Activated CD4-positive, alpha-beta T cell treated with anti-CD3 and anti-CD28 coated beads for 36 hours (primary cell): ENCODE measurements at regions of chr2 and their contacts with region 1.

Region 1: GRCh38 chr2:159712143-159712928 is at the start of gene MARCHF7:
- DNase-seq: peak; percentile 98
- ATAC-seq: peak; percentile 96
- H3K4me3 Mint-ChIP-seq: peak within 1 kb of the TSS; percentile 98
- H3K27ac Mint-ChIP-seq: peak within 1 kb of the TSS; percentile 100
- H3K4me1 Mint-ChIP-seq: peaks cover 42% of the 10 kb centered on the region
- H3K27me3 Mint-ChIP-seq: no peaks in the 10 kb centered on the region
- total RNA-seq, gene MARCHF7: 78.3 to 83.1 TPM

Region 2: GRCh38 chr2:158889135-158889853 is 823.0 kb before region 1 on chr2:
- CTCF ChIA-PET with region 1: interaction called, 4 read pairs
- POLR2A ChIA-PET with region 1: no interaction called
- intact Hi-C with region 1: loop called in 1 of 2 experiments (anchors 1 kb)
- DNase-seq: no peak
- ATAC-seq: peak; percentile 88
- H3K4me3 Mint-ChIP-seq: no peak overlapping the region
- H3K27ac Mint-ChIP-seq: no peak overlapping the region
- H3K4me1 Mint-ChIP-seq: peaks cover 12% of the 10 kb centered on the region
- H3K27me3 Mint-ChIP-seq: peaks cover 4% of the 10 kb centered on the region

Region 3: DNA sequence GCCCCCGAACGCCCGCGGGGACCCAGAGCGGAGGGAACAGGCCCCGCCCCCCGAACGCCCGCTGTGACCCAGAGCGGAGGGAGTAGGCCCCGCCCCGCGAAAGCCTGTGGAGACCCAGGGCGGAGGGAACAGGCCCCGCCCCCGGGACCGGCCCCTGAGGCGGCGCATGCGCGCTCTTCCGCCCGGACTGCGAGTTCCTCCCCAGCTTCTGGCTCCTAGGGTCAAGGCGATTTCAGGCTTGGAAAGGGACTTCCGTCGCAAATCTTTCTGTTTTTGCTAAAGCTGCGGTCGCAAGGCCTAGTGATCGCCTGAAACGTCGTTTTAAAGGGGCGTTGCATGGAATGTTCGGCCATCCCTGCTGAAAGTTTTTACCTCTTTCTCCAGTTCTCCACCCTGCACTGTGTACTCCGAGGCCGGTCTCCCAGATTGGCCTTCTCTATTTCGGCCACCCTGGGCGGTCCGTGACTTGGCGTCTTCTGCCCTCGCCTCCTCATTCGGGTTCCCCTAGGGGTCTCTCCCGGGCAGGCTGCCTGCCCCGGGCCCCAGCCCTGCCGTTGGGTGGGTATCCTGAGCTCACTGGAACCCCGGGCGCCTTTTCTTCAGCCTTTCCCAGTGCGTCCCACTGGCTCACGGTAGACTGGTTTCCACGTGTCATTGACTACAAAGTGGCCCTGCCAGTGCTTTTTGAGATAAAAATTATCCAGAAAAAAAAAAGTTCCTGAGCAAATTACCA is 425.5 kb before region 1 on chr2:
- CTCF ChIA-PET with region 1: no interaction called
- POLR2A ChIA-PET with region 1: interaction called, 3 read pairs
- intact Hi-C with region 1: loop called (anchors 1 kb)
- DNase-seq: peak; percentile 99
- ATAC-seq: peak; percentile 99
- H3K4me3 Mint-ChIP-seq: peak overlapping the region; percentile 84
- H3K27ac Mint-ChIP-seq: peak overlapping the region; percentile 83
- H3K4me1 Mint-ChIP-seq: peaks cover 29% of the 10 kb centered on the region
- H3K27me3 Mint-ChIP-seq: no peaks in the 10 kb centered on the region

Region 4: GRCh38 chr2:159615140-159615951 is 97.0 kb before region 1 on chr2:
- CTCF ChIA-PET with region 1: interaction called, 3 read pairs
- POLR2A ChIA-PET with region 1: no interaction called
- intact Hi-C with region 1: loop called (anchors 1 to 5 kb)
- DNase-seq: peak; percentile 60
- ATAC-seq: peak; percentile 73
- H3K4me3 Mint-ChIP-seq: peak overlapping the region; percentile 82
- H3K27ac Mint-ChIP-seq: peak overlapping the region; percentile 31
- H3K4me1 Mint-ChIP-seq: peaks cover 12% of the 10 kb centered on the region
- H3K27me3 Mint-ChIP-seq: peaks cover 23% of the 10 kb centered on the region

Region 5: DNA sequence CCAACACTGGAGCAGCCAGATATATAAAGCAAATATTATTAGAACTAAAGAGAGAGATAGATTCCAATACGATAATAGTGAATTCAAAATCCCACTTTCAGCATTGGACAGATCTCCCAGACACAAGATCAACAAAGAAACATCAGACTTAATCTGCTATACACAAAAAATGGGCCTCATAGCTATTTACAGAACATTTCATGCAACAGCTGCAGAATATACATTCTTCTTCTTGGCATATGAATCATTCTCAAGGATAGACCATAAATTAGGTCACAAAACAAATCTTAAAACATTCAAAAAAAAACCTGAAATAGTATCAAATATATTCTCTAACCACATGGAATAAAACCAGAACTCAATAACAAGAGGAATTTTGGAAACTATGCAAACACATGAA is 72.2 kb before region 1 on chr2:
- CTCF ChIA-PET with region 1: no interaction called
- POLR2A ChIA-PET with region 1: no interaction called
- intact Hi-C with region 1: no loop called
- DNase-seq: no peak
- ATAC-seq: no peak
- H3K4me3 Mint-ChIP-seq: no peak overlapping the region
- H3K27ac Mint-ChIP-seq: no peak overlapping the region
- H3K4me1 Mint-ChIP-seq: no peaks in the 10 kb centered on the region
- H3K27me3 Mint-ChIP-seq: no peaks in the 10 kb centered on the region

Region 6: DNA sequence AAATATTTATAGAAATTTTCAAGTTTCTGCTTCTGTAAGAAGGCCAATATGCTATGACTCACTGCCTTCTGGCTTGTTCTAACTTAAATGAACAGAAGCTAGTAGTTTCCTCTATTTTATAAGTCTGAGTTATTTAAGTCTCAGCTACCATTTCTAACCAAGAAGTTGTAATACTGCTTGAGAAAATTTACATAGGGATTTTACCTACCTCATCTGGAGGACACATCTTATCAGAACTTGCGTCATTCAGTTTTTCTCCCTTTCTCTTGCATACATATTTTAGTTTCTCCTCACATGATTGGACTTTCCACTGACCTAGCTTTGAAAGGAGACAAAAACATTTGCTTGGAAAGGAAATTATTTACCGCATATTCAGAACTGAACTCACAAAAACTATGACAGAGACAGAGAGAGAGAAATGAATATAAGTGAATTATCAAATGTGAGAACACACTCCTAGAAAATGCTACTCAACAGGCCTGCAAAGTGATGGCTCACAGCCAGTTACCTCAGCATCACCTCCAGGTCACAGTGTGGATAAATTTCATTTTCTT is 166.8 kb after region 1 on chr2:
- CTCF ChIA-PET with region 1: no interaction called
- POLR2A ChIA-PET with region 1: interaction called, 3 read pairs
- intact Hi-C with region 1: loop called in 1 of 2 experiments (anchors 5 kb)
- DNase-seq: peak; percentile 74
- ATAC-seq: peak; percentile 87
- H3K4me3 Mint-ChIP-seq: no peak overlapping the region
- H3K27ac Mint-ChIP-seq: peak overlapping the region; percentile 76
- H3K4me1 Mint-ChIP-seq: peaks cover 62% of the 10 kb centered on the region
- H3K27me3 Mint-ChIP-seq: no peaks in the 10 kb centered on the region

Region 7: GRCh38 chr2:159921752-159922404 is 209.5 kb after region 1 on chr2:
- CTCF ChIA-PET with region 1: no interaction called
- POLR2A ChIA-PET with region 1: no interaction called
- intact Hi-C with region 1: loop called in 1 of 2 experiments (anchors 1 kb)
- DNase-seq: peak; percentile 91
- ATAC-seq: peak; percentile 67
- H3K4me3 Mint-ChIP-seq: peak overlapping the region; percentile 1
- H3K27ac Mint-ChIP-seq: peak overlapping the region; percentile 58
- H3K4me1 Mint-ChIP-seq: peaks cover 41% of the 10 kb centered on the region
- H3K27me3 Mint-ChIP-seq: peaks cover 20% of the 10 kb centered on the region

Region 8: DNA sequence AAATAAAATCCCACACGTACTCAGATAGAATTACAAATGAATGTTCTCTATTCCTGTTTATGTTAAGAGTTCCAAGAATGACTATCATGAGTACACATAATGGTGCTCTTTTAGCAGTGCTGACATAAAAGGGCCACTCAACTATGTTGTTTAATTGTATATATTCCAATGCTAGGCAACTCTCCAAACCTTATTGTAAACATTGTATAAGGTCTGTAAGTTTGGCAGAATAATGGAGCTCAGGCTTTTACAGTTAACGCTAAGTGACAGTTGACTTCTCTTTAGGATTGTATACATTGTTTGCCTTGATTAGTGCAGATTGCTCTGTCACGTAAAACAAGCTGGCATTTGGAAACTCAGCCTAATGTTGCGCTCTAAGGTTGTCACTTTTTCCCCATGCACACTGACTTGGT is 760.5 kb after region 1 on chr2:
- CTCF ChIA-PET with region 1: no interaction called
- POLR2A ChIA-PET with region 1: no interaction called
- intact Hi-C with region 1: loop called in 1 of 2 experiments (anchors 5 kb)
- DNase-seq: no peak
- ATAC-seq: peak; percentile 68
- H3K4me3 Mint-ChIP-seq: no peak overlapping the region
- H3K27ac Mint-ChIP-seq: peak overlapping the region; percentile 85
- H3K4me1 Mint-ChIP-seq: peaks cover 75% of the 10 kb centered on the region
- H3K27me3 Mint-ChIP-seq: no peaks in the 10 kb centered on the region